ENCODE measurements at regions of chr11 and their contacts with region 1.

Region 1: DNA sequence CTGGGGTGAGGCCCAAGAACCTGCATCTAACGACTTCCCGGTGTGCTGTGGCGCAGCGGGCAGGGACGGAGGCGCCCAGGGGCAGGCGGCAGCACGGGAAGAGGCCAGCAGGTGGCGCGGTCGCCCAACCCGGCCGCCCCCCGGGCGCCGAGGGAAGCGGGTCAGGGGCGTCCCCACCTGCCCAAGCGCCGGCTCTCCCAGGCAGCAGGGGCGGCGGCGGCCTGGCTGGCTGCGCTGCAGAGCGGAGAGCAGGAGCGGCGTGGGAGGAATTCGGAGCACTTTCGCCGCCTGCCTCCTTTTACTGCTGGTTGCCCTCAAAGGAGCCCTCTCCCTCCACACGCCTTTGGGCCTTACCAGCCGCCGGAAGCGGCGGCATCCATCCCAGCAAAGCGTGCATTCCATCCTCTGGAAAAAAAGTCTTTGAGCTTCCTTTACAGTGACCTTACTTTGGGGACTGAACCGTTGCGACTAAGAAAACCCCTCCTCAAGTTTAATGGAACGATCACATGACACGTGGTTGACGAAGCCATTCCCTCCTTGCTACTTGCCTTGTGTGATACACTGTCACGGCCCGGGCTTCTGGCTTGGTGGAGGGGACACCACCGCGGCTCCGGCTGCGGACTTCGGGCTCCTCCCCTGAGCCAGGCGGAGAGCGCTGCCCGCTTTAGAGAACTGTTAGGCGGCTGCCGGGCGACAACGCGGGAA is 106.8 kb upstream of the CLMP start:
- DNase-seq: peak; percentile 65
- ATAC-seq: peak; percentile 79
- H3K4me3 Mint-ChIP-seq: peak overlapping the region; percentile 68
- H3K27ac Mint-ChIP-seq: no peak overlapping the region
- H3K4me1 Mint-ChIP-seq: peaks cover 29% of the 10 kb centered on the region
- H3K27me3 Mint-ChIP-seq: peaks cover 4% of the 10 kb centered on the region
- CTCF ChIP-seq: no peak

Region 2: DNA sequence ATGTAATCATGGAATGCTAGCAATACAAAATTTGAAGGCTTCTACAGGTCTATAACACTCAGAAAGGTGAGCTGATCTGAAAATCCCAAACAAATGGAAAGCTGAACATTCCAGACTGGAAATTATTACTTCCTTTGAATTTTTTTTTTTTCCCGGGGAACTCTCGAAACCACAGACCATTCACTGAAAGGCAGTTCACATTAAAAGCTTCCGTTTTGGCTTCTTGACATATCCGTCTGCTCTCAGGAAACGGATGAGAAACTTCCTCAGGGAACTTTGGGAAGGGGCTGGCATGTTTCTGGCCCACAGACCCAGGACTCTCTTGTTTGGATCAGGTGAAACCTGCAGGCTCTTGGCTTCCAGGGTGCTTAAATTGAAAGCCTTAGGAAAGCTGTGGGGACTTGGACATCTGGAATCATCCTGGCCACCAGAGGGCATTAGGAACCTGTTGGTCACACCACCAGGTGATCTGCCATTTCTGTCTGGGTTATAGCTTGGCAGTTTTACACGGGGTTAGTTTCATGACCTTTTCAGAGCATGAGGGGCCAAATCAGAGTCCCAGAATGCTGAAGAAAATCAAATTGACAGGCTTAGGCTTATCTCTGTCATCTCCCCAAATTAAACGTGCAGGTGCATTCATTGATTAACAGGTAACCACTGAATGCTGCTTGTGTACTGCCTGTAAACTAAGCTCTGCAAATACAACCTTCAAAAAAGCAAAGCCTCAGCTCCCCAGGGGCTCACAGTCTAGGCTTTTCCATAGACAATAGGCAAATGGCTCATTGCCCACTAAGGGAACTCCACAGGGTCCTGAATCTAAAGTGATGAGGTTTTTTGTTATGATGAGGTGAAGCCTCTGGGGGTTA is 105.5 kb after region 1 on chr11:
- CTCF ChIA-PET with region 1: interaction called, 4 read pairs
- POLR2A ChIA-PET with region 1: no interaction called
- intact Hi-C with region 1: loop called (anchors 5 kb)
- DNase-seq: no peak
- ATAC-seq: peak; percentile 56
- H3K4me3 Mint-ChIP-seq: no peak overlapping the region
- H3K27ac Mint-ChIP-seq: no peak overlapping the region
- H3K4me1 Mint-ChIP-seq: peaks cover 6% of the 10 kb centered on the region
- H3K27me3 Mint-ChIP-seq: peaks cover 4% of the 10 kb centered on the region
- CTCF ChIP-seq: no peak

Region 3: DNA sequence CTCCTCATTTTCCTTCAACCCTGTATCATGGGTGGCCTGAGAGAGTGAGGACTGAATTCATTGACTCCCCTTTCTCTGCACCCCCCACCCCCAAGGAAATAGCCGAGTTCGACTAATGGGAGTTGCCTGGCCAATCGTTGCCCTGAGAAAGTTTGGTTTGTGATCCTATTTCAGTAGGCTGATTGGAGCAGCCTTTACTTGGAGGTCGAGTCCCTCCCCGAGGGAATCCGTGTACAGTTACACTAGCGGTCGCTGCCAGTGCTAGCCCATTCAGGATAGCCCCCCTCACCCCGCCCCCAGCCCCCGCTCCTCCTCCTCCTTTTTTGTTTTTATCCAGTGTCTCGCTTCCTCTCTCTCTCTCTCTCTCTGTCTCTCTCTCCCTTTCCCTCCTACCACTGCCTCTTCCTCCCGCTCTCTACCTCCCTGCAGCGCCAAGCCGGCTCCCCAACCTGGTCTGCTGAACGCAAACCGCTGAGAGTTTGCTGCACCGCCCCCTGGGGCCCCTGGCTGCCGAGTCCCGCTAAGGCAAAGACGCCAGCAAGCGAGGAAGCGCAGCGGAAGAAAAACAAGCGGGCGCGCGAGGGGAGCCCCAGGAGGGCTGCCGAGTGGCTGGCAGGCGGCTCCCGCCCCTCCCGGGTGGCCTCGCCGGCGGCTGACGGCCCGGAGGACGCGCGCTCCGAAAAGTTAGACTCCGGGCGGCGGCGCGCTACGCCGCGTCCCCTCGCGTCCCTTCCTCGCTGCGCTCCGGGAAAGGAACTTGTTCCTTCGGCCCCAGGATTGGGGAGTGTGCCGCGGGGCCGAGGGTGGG is 128.3 kb after region 1 on chr11 and contains the start of gene GRAMD1B:
- CTCF ChIA-PET with region 1: no interaction called
- POLR2A ChIA-PET with region 1: no interaction called
- intact Hi-C with region 1: loop called (anchors 2 kb)
- DNase-seq: peak; percentile 36
- ATAC-seq: peak; percentile 84
- H3K4me3 Mint-ChIP-seq: peak within 1 kb of the TSS; percentile 82
- H3K27ac Mint-ChIP-seq: no peak within 1 kb of the TSS
- H3K4me1 Mint-ChIP-seq: peaks cover 13% of the 10 kb centered on the region
- H3K27me3 Mint-ChIP-seq: peaks cover 11% of the 10 kb centered on the region
- CTCF ChIP-seq: no peak
- total RNA-seq, gene GRAMD1B: 12.4 and 15.0 TPM in 2 replicates